ENCODE measurements at regions of chr18 and their contacts with region 1.

Region 1: DNA sequence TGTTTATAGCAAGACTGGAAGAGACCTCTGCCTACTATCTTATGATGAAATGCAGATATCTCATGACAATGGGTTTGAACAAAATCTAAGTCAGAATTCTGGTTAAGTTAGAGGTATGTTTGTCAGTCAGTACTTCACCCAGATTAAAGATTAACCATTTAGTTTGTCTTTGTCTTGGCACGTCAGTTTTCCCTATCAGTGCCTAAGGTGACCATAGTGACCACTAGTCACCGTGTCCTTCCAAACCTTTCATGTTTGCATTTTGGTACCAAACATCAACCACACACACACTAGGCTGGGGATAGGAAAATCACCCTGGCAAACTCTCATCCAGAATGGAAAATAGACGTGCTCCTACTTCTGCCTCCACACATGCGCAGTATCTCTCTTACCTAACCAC is 248.9 kb downstream of the PIEZO2 start:
- DNase-seq: no peak
- H3K4me3 ChIP-seq: no peak overlapping the region
- H3K4me3 Mint-ChIP-seq: no peak overlapping the region
- H3K27ac Mint-ChIP-seq: no peak overlapping the region
- H3K4me1 ChIP-seq: 0 out of 2 replicates have a peak, but pooled peaks cover 4% of the 10 kb centered on the region
- H3K4me1 Mint-ChIP-seq: peaks cover 6% of the 10 kb centered on the region
- H3K27me3 ChIP-seq: no peaks in the 10 kb centered on the region
- H3K27me3 Mint-ChIP-seq: no peaks in the 10 kb centered on the region
- CTCF ChIP-seq: no peak

Region 2: GRCh38 chr18:10953672-10954071 is 53.2 kb after region 1 on chr18:
- CTCF ChIA-PET with region 1: no interaction called
- POLR2A ChIA-PET with region 1: no interaction called
- intact Hi-C with region 1: loop called (anchors 5 kb)
- DNase-seq: no peak
- H3K4me3 ChIP-seq: no peak overlapping the region
- H3K4me3 Mint-ChIP-seq: no peak overlapping the region
- H3K27ac Mint-ChIP-seq: no peak overlapping the region
- H3K4me1 ChIP-seq: no peaks in the 10 kb centered on the region
- H3K4me1 Mint-ChIP-seq: no peaks in the 10 kb centered on the region
- H3K27me3 ChIP-seq: no peaks in the 10 kb centered on the region
- H3K27me3 Mint-ChIP-seq: peaks cover 3% of the 10 kb centered on the region
- CTCF ChIP-seq: no peak

Measured in Caco-2 (cell line).